Common myeloid progenitor, CD34-positive (primary cell): ENCODE measurements at regions of chr20 and their contacts with region 1.

Region 1: DNA sequence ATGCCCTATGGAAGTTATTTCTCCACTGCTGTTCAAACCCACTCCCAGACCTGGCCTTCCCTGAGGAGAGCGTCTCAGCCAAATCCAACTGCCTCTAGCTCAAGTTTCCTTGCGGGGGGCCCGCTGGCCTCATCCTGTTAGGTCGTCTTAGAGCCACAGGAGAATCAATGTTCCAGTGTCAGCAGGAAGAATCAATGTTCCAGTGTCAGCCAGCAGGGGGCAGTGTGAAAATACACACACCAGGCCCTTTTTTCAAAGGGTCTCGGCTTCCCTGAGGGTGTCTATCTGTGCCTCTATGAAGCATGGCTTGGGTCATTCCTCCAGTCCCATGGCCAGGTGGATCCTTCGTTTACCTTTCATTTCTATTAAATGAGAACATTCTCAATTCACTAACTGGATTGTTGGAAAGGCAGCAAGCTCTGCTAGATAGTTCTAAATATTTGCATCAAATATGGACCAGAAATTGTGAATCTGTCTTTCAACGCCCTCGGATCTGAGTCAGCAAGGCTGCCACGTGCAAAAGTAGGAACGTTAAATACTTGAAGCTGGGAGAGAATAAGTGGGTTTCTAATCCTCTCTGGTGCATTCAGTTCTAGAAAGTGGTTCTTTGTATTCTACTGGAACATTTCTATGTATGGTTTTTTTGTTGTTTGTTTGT is 19.2 kb downstream of the PRND start:
- DNase-seq: peak; percentile 62 to 78 (median 67)
- H3K4me3 ChIP-seq: no peak overlapping the region
- H3K27ac ChIP-seq: no peak overlapping the region
- H3K4me1 ChIP-seq: no peaks in the 10 kb centered on the region
- H3K27me3 ChIP-seq: no peaks in the 10 kb centered on the region

Region 2: GRCh38 chr20:4726710-4727397 is 14.0 kb before region 1 on chr20:
- CTCF ChIA-PET with region 1: interaction called, 12 read pairs
- POLR2A ChIA-PET with region 1: interaction called, 4 read pairs
- DNase-seq: peak; percentile 67 to 88 (median 84)
- H3K4me3 ChIP-seq: peak overlapping the region in 4 of 7 experiments; percentile 2 to 71 (median 42)
- H3K27ac ChIP-seq: no peak overlapping the region
- H3K4me1 ChIP-seq: peaks cover 0 to 11% (median 2%) of the 10 kb centered on the region in 4 experiments
- H3K27me3 ChIP-seq: peaks cover 0 to 4% (median 0%) of the 10 kb centered on the region in 5 experiments

Region 3: GRCh38 chr20:4795394-4795793 is 54.5 kb after region 1 on chr20:
- CTCF ChIA-PET with region 1: no interaction called
- POLR2A ChIA-PET with region 1: no interaction called
- DNase-seq: peak; percentile 90 to 97 (median 97)
- H3K4me3 ChIP-seq: no peak overlapping the region
- H3K27ac ChIP-seq: no peak overlapping the region
- H3K4me1 ChIP-seq: peaks cover 0 to 14% (median 12%) of the 10 kb centered on the region in 4 experiments
- H3K27me3 ChIP-seq: no peaks in the 10 kb centered on the region

Region 4: DNA sequence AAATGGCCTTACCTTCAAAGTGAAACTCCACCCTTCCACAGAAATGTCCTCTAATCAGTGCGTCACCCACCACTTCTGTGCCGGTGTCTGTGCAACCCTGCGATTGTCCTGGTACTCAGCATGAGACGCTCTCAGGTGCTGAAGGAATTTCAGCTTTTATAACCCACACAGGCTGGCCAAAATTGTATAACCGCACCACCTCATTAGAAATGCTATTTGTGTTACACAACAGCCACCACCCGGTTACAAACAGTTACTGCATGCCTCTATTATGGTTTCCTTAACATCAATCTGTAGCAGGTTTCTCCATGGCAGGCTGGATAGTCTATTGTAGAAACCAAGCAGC is 208.9 kb after region 1 on chr20:
- CTCF ChIA-PET with region 1: interaction called, 34 read pairs
- POLR2A ChIA-PET with region 1: no interaction called
- DNase-seq: peak; percentile 52 to 78 (median 78)
- H3K4me3 ChIP-seq: no peak overlapping the region
- H3K27ac ChIP-seq: no peak overlapping the region
- H3K4me1 ChIP-seq: peaks cover 0 to 5% (median 2%) of the 10 kb centered on the region in 4 experiments
- H3K27me3 ChIP-seq: no peaks in the 10 kb centered on the region

Region 5: DNA sequence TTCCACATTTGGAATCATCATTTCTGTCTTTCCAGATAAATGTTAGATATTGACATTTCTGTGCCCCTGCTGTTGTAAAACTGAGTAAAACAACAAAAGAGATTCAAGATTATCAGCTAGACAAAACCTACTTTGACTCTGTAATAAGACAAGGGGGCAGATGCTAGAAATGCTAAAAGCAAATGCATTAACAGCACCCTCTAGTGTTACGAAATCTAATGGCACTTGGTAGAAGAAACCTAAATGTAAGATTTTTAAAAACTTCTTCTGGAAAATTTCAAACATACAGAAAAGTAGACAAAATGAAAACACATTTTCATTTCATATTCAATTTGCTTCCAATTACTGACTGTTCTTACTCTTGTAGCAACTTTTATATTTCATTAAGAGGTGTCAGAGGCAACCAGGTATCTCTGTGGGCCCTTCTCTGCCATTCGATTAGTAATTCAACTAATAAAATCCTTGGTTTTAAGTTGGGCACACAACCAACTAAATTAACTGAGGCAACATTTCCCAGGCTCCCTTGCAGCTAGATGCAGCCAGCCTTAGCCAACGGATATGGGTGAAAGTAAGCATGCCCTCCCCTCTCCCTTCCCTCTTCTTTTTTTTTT is 215.4 kb after region 1 on chr20:
- CTCF ChIA-PET with region 1: interaction called, 34 read pairs
- POLR2A ChIA-PET with region 1: no interaction called
- DNase-seq: peak; percentile 65 to 87 (median 81)
- H3K4me3 ChIP-seq: no peak overlapping the region
- H3K27ac ChIP-seq: no peak overlapping the region
- H3K4me1 ChIP-seq: no peaks in the 10 kb centered on the region
- H3K27me3 ChIP-seq: no peaks in the 10 kb centered on the region